Cardiac septum (tissue), 1 donor: ENCODE measurements at regions of chr14 and their contacts with region 1.

Region 1: DNA sequence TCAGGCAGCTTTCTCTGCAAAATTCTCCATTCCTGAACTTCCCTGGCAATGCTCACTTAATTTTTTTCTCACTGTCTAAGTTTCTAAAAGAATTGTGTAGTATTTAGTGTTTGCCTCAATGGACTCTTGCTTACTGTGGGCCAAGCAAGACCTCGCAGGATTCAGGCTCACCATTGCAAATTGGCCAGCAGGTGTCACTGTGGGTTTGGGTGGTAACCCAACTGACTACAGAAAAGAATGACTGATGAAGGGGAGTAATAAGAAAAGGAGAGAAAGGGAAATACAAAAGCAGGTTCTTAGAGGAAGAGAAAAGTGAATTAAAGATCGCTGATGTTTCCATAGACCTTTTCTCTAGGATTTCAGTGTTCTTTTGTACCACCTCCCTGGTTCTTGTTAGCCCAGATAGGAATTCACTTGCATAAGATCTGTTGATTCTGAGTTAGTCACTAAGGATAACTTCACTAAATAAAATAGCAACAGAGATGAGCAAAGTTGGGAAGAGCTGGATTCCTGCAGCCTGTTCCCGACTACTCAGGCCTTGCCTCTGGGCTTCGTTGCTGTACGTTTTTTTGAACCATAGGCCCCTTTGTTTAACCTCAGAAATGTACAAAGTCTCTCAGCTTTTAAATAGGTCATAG is 386.5 kb upstream of the DDHD1 start:
- DNase-seq: peak; percentile 78

Region 2: GRCh38 chr14:54025661-54026060 is 486.1 kb after region 1 on chr14:
- intact Hi-C with region 1: loop called (anchors 10 kb)
- DNase-seq: no peak

Region 3: GRCh38 chr14:54173802-54174201 is 634.2 kb after region 1 on chr14:
- intact Hi-C with region 1: loop called (anchors 5 kb)
- DNase-seq: no peak

Region 4: GRCh38 chr14:54330876-54331275 is 791.3 kb after region 1 on chr14:
- intact Hi-C with region 1: loop called (anchors 5 kb)
- DNase-seq: no peak